ENCODE measurements at regions of chr3 and their contacts with region 1.

Region 1: DNA sequence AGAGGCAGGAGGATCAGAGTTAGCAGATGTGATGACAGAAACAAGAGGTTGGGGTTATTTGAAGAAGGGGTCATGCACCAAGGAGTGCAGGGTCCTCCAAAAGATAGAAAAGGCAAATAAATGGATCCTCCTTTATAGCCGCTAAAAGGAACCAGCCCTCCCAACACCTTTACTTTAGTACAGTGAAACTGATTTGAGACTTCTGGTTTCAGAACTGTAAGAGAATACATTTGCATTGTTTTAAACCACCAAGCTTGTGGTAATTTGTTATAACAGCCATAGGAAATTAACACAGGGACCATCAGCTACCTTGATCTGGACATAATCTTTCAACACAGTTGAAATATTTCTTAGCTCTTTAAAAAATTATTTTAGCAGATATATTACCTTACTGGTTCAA is 166.6 kb downstream of the TIGIT start:
- DNase-seq: no peak
- H3K4me3 ChIP-seq: no peak overlapping the region
- H3K27ac ChIP-seq: no peak overlapping the region
- H3K4me1 ChIP-seq: peaks cover 36% of the 10 kb centered on the region
- CTCF ChIP-seq: no peak

Region 2: GRCh38 chr3:114478801-114479200 is 18.3 kb after region 1 on chr3:
- CTCF ChIA-PET with region 1: no interaction called
- POLR2A ChIA-PET with region 1: interaction called, 13 read pairs
- intact Hi-C with region 1: no loop called
- DNase-seq: no peak
- H3K4me3 ChIP-seq: no peak overlapping the region
- H3K27ac ChIP-seq: no peak overlapping the region
- H3K4me1 ChIP-seq: no peaks in the 10 kb centered on the region
- CTCF ChIP-seq: no peak

Region 3: GRCh38 chr3:114504941-114505632 is 44.6 kb after region 1 on chr3:
- CTCF ChIA-PET with region 1: no interaction called
- POLR2A ChIA-PET with region 1: no interaction called
- intact Hi-C with region 1: no loop called
- DNase-seq: no peak
- H3K4me3 ChIP-seq: no peak overlapping the region
- H3K27ac ChIP-seq: no peak overlapping the region
- H3K4me1 ChIP-seq: no peaks in the 10 kb centered on the region
- CTCF ChIP-seq: no peak